ENCODE measurements at regions of chr3 and their contacts with region 1.

Region 1: GRCh38 chr3:33773637-33774036 is 24.8 kb upstream of the PDCD6IP start:
- DNase-seq: no peak
- H3K4me3 ChIP-seq: no peak overlapping the region
- H3K27ac ChIP-seq: no peak overlapping the region
- H3K4me1 ChIP-seq: 0 out of 4 replicates have a peak, but pooled peaks cover 0 to 5% of the 10 kb centered on the region in 2 experiments
- H3K27me3 ChIP-seq: no peaks in the 10 kb centered on the region
- CTCF ChIP-seq: no peak
- EP300 ChIP-seq: no peak
- RAD21 ChIP-seq: no peak

Region 2: DNA sequence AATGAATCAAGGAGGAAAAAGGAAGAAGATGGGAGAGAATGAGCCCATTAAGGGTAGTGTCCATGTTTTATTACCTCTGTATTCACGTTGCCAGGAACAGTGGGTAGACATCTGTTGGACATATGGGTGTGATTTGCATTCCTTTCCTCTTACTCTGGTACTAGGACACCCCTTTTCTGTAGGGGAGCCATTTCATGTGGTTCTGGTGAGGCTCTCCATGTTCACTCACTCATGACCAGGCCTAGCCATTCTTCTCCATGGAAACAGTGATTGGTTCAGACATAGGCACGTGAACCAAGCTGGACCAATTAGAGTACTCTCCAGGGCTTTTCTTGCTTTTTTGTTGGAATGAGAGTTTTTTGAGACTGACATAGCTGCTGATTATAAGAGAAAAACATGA is 14.8 kb before region 1 on chr3:
- CTCF ChIA-PET with region 1: interaction called, 12 read pairs
- POLR2A ChIA-PET with region 1: no interaction called
- DNase-seq: no peak
- H3K4me3 ChIP-seq: no peak overlapping the region
- H3K27ac ChIP-seq: no peak overlapping the region
- H3K4me1 ChIP-seq: no peaks in the 10 kb centered on the region
- H3K27me3 ChIP-seq: no peaks in the 10 kb centered on the region
- CTCF ChIP-seq: no peak
- EP300 ChIP-seq: no peak
- RAD21 ChIP-seq: no peak

Region 3: DNA sequence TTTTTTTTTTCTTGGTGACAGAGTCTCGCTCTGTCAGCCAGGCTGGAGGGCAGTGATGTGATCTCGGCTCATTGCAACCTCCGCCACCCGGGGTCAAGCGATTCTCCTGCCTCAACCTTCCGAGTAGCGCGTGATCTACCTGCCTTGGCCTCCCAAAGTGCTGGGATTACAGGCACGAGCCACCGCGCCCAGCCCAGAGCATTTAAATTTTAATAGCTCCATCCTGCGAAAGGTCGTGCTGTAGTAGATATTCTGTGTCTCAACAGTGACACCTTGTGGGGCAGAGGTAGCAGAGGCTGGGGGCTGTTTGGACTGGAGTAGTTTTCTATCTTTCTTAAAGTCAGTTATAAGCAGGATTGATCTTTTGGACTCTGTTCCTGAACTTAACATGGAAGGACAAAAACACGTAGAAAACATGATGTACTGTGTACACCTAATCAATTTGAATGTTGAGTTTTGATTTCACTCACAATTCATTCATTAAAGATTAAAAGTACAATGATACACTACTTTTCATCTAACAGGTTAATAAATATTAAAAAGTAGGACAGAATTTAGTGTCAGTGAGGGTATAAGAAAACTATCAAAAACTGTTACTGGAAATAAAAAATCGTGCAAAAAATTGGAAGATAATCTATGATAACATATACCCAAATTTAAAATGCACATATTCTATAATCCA is 13.8 kb after region 1 on chr3:
- CTCF ChIA-PET with region 1: interaction called, 90 read pairs
- POLR2A ChIA-PET with region 1: no interaction called
- DNase-seq: peak; percentile 64
- H3K4me3 ChIP-seq: peak overlapping the region; percentile 39 to 55
- H3K27ac ChIP-seq: no peak overlapping the region
- H3K4me1 ChIP-seq: peaks cover 4 to 6% of the 10 kb centered on the region in 2 experiments; a peak in 2 of 4 replicates
- H3K27me3 ChIP-seq: no peaks in the 10 kb centered on the region
- CTCF ChIP-seq: peak; percentile 90
- EP300 ChIP-seq: no peak
- RAD21 ChIP-seq: peak; percentile 86

Region 4: GRCh38 chr3:33807190-33807589 is 33.6 kb after region 1 on chr3:
- CTCF ChIA-PET with region 1: no interaction called
- POLR2A ChIA-PET with region 1: no interaction called
- DNase-seq: no peak
- H3K4me3 ChIP-seq: no peak overlapping the region
- H3K27ac ChIP-seq: no peak overlapping the region
- H3K4me1 ChIP-seq: peaks cover 0 to 3% of the 10 kb centered on the region in 2 experiments; a peak in 1 of 4 replicates
- H3K27me3 ChIP-seq: no peaks in the 10 kb centered on the region
- CTCF ChIP-seq: no peak
- EP300 ChIP-seq: no peak
- RAD21 ChIP-seq: no peak